ENCODE measurements at regions of chr3 and their contacts with region 1.

Region 1: GRCh38 chr3:152205097-152205593 is 63.6 kb upstream of the MBNL1 start:
- DNase-seq: no peak
- H3K4me3 ChIP-seq: peak overlapping the region; percentile 39 to 48
- H3K27ac ChIP-seq: peak overlapping the region; percentile 74 to 91
- H3K4me1 ChIP-seq: peaks cover 0 to 92% (median 13%) of the 10 kb centered on the region in 4 donors
- H3K27me3 ChIP-seq: no peaks in the 10 kb centered on the region
- CTCF ChIP-seq: no peak

Region 2: GRCh38 chr3:152159328-152159727 is 45.8 kb before region 1 on chr3:
- intact Hi-C with region 1: loop called (anchors 10 kb)
- DNase-seq: peak; percentile 24 to 68
- H3K4me3 ChIP-seq: no peak overlapping the region
- H3K27ac ChIP-seq: peak overlapping the region; percentile 69 to 81
- H3K4me1 ChIP-seq: peaks cover 0 to 75% (median 22%) of the 10 kb centered on the region in 4 donors
- H3K27me3 ChIP-seq: no peaks in the 10 kb centered on the region
- CTCF ChIP-seq: no peak